HEK293 (cell line): ENCODE measurements at regions of chr6 and their contacts with region 1.

Region 1: GRCh38 chr6:36765594-36766398 is 68.2 kb downstream of the RAB44 start:
- H3K4me3 ChIP-seq: no peak overlapping the region
- H3K27ac ChIP-seq: no peak overlapping the region
- H3K4me1 ChIP-seq: no peaks in the 10 kb centered on the region
- CTCF ChIP-seq: peak; percentile 85

Region 2: DNA sequence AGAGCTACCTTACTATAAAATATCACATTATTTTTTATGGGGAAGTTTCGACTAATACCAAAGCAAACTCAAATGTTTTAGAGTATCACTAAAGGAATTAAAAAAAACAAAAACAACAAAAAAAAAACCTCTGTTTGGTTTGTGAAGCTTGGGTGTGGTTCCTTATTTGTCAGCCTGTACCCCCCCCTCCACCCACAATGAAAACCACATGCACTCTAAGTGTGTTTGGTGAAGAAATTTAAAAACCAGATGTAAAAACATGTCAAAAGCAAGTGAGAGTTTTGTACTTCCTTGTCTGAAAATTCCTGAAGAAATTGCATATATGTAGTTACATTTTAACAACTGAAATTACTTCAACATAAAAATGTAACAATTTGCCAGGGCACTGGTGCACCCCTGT is 221.6 kb before region 1 on chr6:
- CTCF ChIA-PET with region 1: no interaction called
- POLR2A ChIA-PET with region 1: no interaction called
- H3K4me3 ChIP-seq: no peak overlapping the region
- H3K27ac ChIP-seq: no peak overlapping the region
- H3K4me1 ChIP-seq: peaks cover 10% of the 10 kb centered on the region; the same call in 1 of the 2 replicates
- CTCF ChIP-seq: no peak

Region 3: GRCh38 chr6:36623547-36624459 is 142.0 kb before region 1 on chr6:
- CTCF ChIA-PET with region 1: interaction called, 156 read pairs
- POLR2A ChIA-PET with region 1: interaction called, 3 read pairs
- H3K4me3 ChIP-seq: no peak overlapping the region
- H3K27ac ChIP-seq: no peak overlapping the region
- H3K4me1 ChIP-seq: no peaks in the 10 kb centered on the region; the same call in 1 of the 2 replicates
- CTCF ChIP-seq: peak; percentile 92

Region 4: DNA sequence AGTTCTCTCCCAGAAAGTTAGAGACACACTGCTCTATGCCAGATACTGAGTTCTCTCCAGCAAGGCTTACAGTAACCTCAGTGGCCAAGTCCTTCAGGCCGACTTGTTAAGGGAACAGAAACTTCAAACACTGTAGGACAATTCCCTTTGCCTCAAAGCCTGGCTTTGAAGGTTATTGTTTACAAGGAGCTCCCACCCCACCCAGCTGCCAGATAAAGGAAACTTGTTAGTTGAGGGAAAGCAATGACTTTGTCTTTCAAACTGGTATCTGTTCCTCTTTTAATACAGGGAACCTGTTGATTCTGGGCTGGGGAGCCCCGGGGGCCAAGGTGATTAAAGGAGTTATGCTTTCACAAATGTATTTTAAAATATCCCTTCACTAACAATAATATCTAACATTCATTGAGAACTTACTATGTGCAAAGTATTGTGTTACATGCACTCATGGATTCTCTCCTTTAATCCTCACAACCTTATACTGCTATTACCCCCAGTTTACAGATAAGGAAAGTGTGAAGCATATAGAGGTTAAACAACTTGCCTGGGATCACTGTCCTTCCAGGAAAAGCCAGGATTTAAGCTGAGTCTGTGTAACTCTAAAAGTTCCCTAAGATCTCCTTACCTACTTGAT is 114.8 kb before region 1 on chr6:
- CTCF ChIA-PET with region 1: no interaction called
- POLR2A ChIA-PET with region 1: no interaction called
- H3K4me3 ChIP-seq: no peak overlapping the region
- H3K27ac ChIP-seq: no peak overlapping the region; the same call in 1 of the 2 replicates
- H3K4me1 ChIP-seq: peaks cover 24% of the 10 kb centered on the region
- CTCF ChIP-seq: no peak

Region 5: GRCh38 chr6:36780442-36781177 is 14.8 kb after region 1 on chr6:
- CTCF ChIA-PET with region 1: interaction called, 182 read pairs
- POLR2A ChIA-PET with region 1: no interaction called
- H3K4me3 ChIP-seq: no peak overlapping the region
- H3K27ac ChIP-seq: no peak overlapping the region
- H3K4me1 ChIP-seq: no peaks in the 10 kb centered on the region
- CTCF ChIP-seq: no peak

Region 6: GRCh38 chr6:36851149-36851614 is 85.4 kb after region 1 on chr6:
- CTCF ChIA-PET with region 1: interaction called, 298 read pairs
- POLR2A ChIA-PET with region 1: interaction called, 3 read pairs
- H3K4me3 ChIP-seq: no peak overlapping the region
- H3K27ac ChIP-seq: no peak overlapping the region
- H3K4me1 ChIP-seq: no peaks in the 10 kb centered on the region; the same call in 1 of the 2 replicates
- CTCF ChIP-seq: peak; percentile 40; the same call in 1 of the 2 replicates

Region 7: GRCh38 chr6:36885461-36886401 is 119.9 kb after region 1 on chr6 and contains the start of gene C6orf89:
- CTCF ChIA-PET with region 1: interaction called, 34 read pairs
- POLR2A ChIA-PET with region 1: interaction called, 3 read pairs
- H3K4me3 ChIP-seq: peak within 1 kb of the TSS; percentile 81
- H3K27ac ChIP-seq: peak within 1 kb of the TSS; percentile 66
- H3K4me1 ChIP-seq: peaks cover 3% of the 10 kb centered on the region; the same call in 1 of the 2 replicates
- CTCF ChIP-seq: peak; percentile 92

Region 8: GRCh38 chr6:37051138-37052026 is 285.6 kb after region 1 on chr6:
- CTCF ChIA-PET with region 1: interaction called, 12 read pairs
- POLR2A ChIA-PET with region 1: no interaction called
- H3K4me3 ChIP-seq: no peak overlapping the region
- H3K27ac ChIP-seq: no peak overlapping the region
- H3K4me1 ChIP-seq: no peaks in the 10 kb centered on the region
- CTCF ChIP-seq: peak; percentile 97

Region 9: GRCh38 chr6:37207903-37208456 is 442.2 kb after region 1 on chr6:
- CTCF ChIA-PET with region 1: interaction called, 64 read pairs
- POLR2A ChIA-PET with region 1: no interaction called
- H3K4me3 ChIP-seq: no peak overlapping the region
- H3K27ac ChIP-seq: no peak overlapping the region
- H3K4me1 ChIP-seq: peaks cover 2% of the 10 kb centered on the region
- CTCF ChIP-seq: peak; percentile 85